Heart right ventricle (tissue), 16 donors: ENCODE measurements at regions of chr13 and their contacts with region 1.

Region 1: GRCh38 chr13:102872131-102872530 is 26.3 kb downstream of the ERCC5 start:
- DNase-seq: no peak
- ATAC-seq: no peak
- H3K4me3 ChIP-seq: no peak overlapping the region
- H3K27ac ChIP-seq: no peak overlapping the region
- H3K4me1 ChIP-seq: peaks cover 0 to 29% (median 12%) of the 10 kb centered on the region in 9 donors
- H3K27me3 ChIP-seq: no peaks in the 10 kb centered on the region
- CTCF ChIP-seq: no peak

Region 2: GRCh38 chr13:102892503-102892902 is 20.4 kb after region 1 on chr13:
- intact Hi-C with region 1: loop called in 1 of 10 experiments (anchors 1 kb)
- DNase-seq: no peak
- ATAC-seq: no peak
- H3K4me3 ChIP-seq: no peak overlapping the region
- H3K27ac ChIP-seq: no peak overlapping the region
- H3K4me1 ChIP-seq: peaks cover 0 to 6% (median 0%) of the 10 kb centered on the region in 9 donors
- H3K27me3 ChIP-seq: no peaks in the 10 kb centered on the region
- CTCF ChIP-seq: no peak